Activated B cell treated with CpG ODN at 0.5 μM for 24 hours (primary cell): ENCODE measurements at regions of chr17 and their contacts with region 1.

Region 1: GRCh38 chr17:57130761-57131461 is 45.9 kb downstream of the AKAP1 start:
- DNase-seq: peak; percentile 52
- ATAC-seq: peak; percentile 91
- H3K4me3 Mint-ChIP-seq: no peak overlapping the region
- H3K27ac Mint-ChIP-seq: no peak overlapping the region
- H3K4me1 Mint-ChIP-seq: peaks cover 13% of the 10 kb centered on the region
- H3K27me3 Mint-ChIP-seq: peaks cover 3% of the 10 kb centered on the region
- CTCF ChIP-seq: no peak

Region 2: GRCh38 chr17:57158296-57158695 is 27.4 kb after region 1 on chr17:
- CTCF ChIA-PET with region 1: no interaction called
- POLR2A ChIA-PET with region 1: no interaction called
- intact Hi-C with region 1: no loop called
- DNase-seq: no peak
- ATAC-seq: no peak
- H3K4me3 Mint-ChIP-seq: no peak overlapping the region
- H3K27ac Mint-ChIP-seq: no peak overlapping the region
- H3K4me1 Mint-ChIP-seq: no peaks in the 10 kb centered on the region
- H3K27me3 Mint-ChIP-seq: peaks cover 10% of the 10 kb centered on the region
- CTCF ChIP-seq: no peak

Region 3: GRCh38 chr17:57210224-57210553 is 79.3 kb after region 1 on chr17:
- CTCF ChIA-PET with region 1: no interaction called
- POLR2A ChIA-PET with region 1: no interaction called
- intact Hi-C with region 1: no loop called
- DNase-seq: no peak
- ATAC-seq: no peak
- H3K4me3 Mint-ChIP-seq: no peak overlapping the region
- H3K27ac Mint-ChIP-seq: no peak overlapping the region
- H3K4me1 Mint-ChIP-seq: no peaks in the 10 kb centered on the region
- H3K27me3 Mint-ChIP-seq: peaks cover 17% of the 10 kb centered on the region
- CTCF ChIP-seq: no peak

Region 4: DNA sequence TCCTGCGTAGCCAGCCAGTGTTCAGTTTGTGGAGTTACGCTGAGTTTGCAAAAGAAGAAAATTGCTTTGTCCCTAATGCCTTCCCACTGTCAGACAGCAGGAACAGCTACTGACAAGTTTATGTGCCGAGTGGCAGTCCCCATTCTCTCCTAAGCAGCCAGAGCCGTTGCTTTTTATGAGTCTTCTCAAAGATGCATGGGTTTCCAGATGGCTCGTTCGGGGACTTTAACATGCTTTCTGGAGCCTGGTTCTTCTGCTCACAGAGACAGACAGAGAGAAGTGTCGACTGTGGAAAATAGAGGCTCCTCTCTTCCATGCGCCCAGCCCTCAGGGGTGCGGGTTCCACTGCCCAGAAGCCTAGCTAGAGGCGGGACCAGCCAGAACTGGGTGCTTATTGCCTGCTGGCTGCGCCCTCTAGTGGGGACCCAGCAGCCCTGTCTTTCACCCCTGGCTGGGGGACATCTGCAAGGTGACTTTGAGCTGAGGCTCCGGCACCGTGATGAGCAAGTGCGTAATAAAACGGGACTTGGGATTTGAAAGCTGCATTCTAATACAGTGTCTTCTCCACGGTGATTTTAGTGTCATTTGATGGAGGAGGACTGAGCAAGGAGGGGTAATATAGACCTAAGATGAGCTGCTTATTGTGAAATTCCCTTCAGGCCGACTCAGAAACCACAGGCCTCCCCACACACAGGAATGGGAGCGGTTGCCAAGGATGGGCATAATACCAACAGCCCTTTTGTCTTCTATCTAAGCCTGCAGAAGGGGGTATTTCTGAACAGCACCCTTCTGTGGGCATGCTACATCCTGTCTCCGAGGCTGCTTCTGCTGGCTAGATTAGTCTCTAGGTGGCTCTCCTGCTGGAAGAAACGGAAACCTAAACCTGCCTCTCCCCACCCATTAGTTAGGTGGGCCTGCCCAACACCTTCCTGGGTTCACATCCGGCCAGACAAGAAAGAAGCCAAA is 541.0 kb after region 1 on chr17:
- CTCF ChIA-PET with region 1: interaction called, 4 read pairs
- POLR2A ChIA-PET with region 1: no interaction called
- intact Hi-C with region 1: loop called (anchors 2 kb)
- DNase-seq: peak; percentile 56
- ATAC-seq: peak; percentile 91
- H3K4me3 Mint-ChIP-seq: no peak overlapping the region
- H3K27ac Mint-ChIP-seq: no peak overlapping the region
- H3K4me1 Mint-ChIP-seq: peaks cover 8% of the 10 kb centered on the region
- H3K27me3 Mint-ChIP-seq: no peaks in the 10 kb centered on the region
- CTCF ChIP-seq: peak; percentile 88

Region 5: GRCh38 chr17:57739402-57740392 is 608.8 kb after region 1 on chr17:
- CTCF ChIA-PET with region 1: no interaction called
- POLR2A ChIA-PET with region 1: no interaction called
- intact Hi-C with region 1: loop called (anchors 1 kb)
- DNase-seq: no peak
- ATAC-seq: peak; percentile 58
- H3K4me3 Mint-ChIP-seq: no peak overlapping the region
- H3K27ac Mint-ChIP-seq: no peak overlapping the region
- H3K4me1 Mint-ChIP-seq: peaks cover 25% of the 10 kb centered on the region
- H3K27me3 Mint-ChIP-seq: no peaks in the 10 kb centered on the region
- CTCF ChIP-seq: no peak

Region 6: GRCh38 chr17:57747221-57748017 is 616.5 kb after region 1 on chr17:
- CTCF ChIA-PET with region 1: interaction called, 18 read pairs
- POLR2A ChIA-PET with region 1: no interaction called
- intact Hi-C with region 1: loop called (anchors 1 kb)
- DNase-seq: no peak
- ATAC-seq: peak; percentile 74
- H3K4me3 Mint-ChIP-seq: no peak overlapping the region
- H3K27ac Mint-ChIP-seq: no peak overlapping the region
- H3K4me1 Mint-ChIP-seq: peaks cover 17% of the 10 kb centered on the region
- H3K27me3 Mint-ChIP-seq: peaks cover 7% of the 10 kb centered on the region
- CTCF ChIP-seq: no peak

Region 7: GRCh38 chr17:57783106-57783742 is 652.3 kb after region 1 on chr17:
- CTCF ChIA-PET with region 1: interaction called, 4 read pairs
- POLR2A ChIA-PET with region 1: no interaction called
- intact Hi-C with region 1: loop called (anchors 1 kb)
- DNase-seq: peak; percentile 65
- ATAC-seq: peak; percentile 81
- H3K4me3 Mint-ChIP-seq: no peak overlapping the region
- H3K27ac Mint-ChIP-seq: no peak overlapping the region
- H3K4me1 Mint-ChIP-seq: peaks cover 3% of the 10 kb centered on the region
- H3K27me3 Mint-ChIP-seq: peaks cover 5% of the 10 kb centered on the region
- CTCF ChIP-seq: no peak

Region 8: GRCh38 chr17:57833179-57833939 is 702.4 kb after region 1 on chr17:
- CTCF ChIA-PET with region 1: interaction called, 18 read pairs
- POLR2A ChIA-PET with region 1: no interaction called
- intact Hi-C with region 1: loop called (anchors 1 kb)
- DNase-seq: peak; percentile 37
- ATAC-seq: peak; percentile 74
- H3K4me3 Mint-ChIP-seq: no peak overlapping the region
- H3K27ac Mint-ChIP-seq: no peak overlapping the region
- H3K4me1 Mint-ChIP-seq: no peaks in the 10 kb centered on the region
- H3K27me3 Mint-ChIP-seq: no peaks in the 10 kb centered on the region
- CTCF ChIP-seq: peak; percentile 65

Region 9: DNA sequence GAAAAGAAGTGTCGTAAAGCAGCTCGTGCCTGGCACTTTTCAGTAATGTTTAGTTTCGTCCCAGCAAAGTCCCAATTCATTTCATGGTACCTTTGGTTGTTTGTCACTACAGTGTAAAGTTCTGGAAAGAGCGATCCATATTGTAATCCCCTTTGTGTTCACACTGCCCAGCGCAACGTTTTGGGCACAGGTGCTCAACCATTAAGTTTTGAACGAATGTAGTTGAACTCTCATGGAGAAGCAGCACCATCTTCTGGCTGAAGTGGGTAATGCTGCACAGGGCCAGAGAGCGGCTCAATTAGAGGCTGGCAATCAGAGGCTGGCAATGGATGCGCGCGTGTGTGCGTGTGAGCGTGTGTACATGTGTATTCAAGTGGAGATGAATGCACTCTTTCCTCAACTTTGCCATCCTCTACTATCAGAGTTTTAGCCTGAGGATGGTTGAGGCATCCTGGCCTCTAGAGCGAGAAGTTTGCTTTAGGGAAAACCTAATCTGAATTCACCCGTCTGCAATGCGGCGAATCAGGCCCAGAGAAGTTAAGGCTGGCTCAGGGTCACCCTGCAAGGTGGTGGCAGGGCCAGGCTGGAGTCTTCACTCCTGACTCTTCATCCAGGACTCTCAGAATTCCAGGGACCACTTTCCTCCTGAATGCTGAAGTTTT is 982.2 kb after region 1 on chr17:
- CTCF ChIA-PET with region 1: interaction called, 3 read pairs
- POLR2A ChIA-PET with region 1: no interaction called
- intact Hi-C with region 1: loop called (anchors 1 kb)
- DNase-seq: peak; percentile 68
- ATAC-seq: peak; percentile 95
- H3K4me3 Mint-ChIP-seq: no peak overlapping the region
- H3K27ac Mint-ChIP-seq: no peak overlapping the region
- H3K4me1 Mint-ChIP-seq: no peaks in the 10 kb centered on the region
- H3K27me3 Mint-ChIP-seq: peaks cover 25% of the 10 kb centered on the region
- CTCF ChIP-seq: peak; percentile 53